ENCODE measurements at regions of chr16 and their contacts with region 1.

Region 1: GRCh38 chr16:11094857-11095565 is 150.6 kb downstream of the CLEC16A start:
- DNase-seq: no peak
- ATAC-seq: no peak
- H3K4me3 ChIP-seq: no peak overlapping the region
- H3K27ac ChIP-seq: peak overlapping the region in 1 of 10 donors; percentile 0
- H3K4me1 ChIP-seq: peaks cover 0 to 22% (median 7%) of the 10 kb centered on the region in 9 donors
- H3K27me3 ChIP-seq: no peaks in the 10 kb centered on the region
- CTCF ChIP-seq: no peak

Region 2: DNA sequence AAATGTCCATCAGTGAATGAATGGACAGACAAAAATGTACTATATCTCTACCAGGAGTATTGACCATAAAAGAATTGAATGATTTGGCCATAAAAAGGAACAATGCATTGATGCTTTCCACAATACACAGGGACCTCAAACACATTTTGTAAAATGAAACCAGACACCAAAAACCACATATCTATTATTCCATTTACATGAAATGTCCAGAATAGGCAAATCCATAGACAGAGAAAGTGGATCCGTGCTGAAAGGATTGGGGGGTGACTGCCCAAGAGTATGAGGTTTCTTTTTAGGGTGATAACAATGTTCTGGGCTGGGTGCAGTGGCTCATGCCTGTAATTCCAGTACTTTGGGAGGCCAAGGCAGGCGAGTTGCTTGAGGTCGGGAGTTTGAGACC is 498.6 kb after region 1 on chr16:
- intact Hi-C with region 1: loop called in 1 of 10 experiments (anchors 5 kb)
- DNase-seq: no peak
- ATAC-seq: no peak
- H3K4me3 ChIP-seq: no peak overlapping the region
- H3K27ac ChIP-seq: no peak overlapping the region
- H3K4me1 ChIP-seq: peaks cover 0 to 36% (median 4%) of the 10 kb centered on the region in 9 donors
- H3K27me3 ChIP-seq: no peaks in the 10 kb centered on the region
- CTCF ChIP-seq: no peak

Measured in heart right ventricle (tissue), 16 donors.